ENCODE measurements at regions of chr19 and their contacts with region 1.

Region 1: GRCh38 chr19:7348587-7349230 is at the start of gene ARHGEF18:
- DNase-seq: peak; percentile 60
- H3K4me3 Mint-ChIP-seq: peak within 1 kb of the TSS; percentile 79
- H3K27ac Mint-ChIP-seq: peak within 1 kb of the TSS; percentile 85
- H3K4me1 Mint-ChIP-seq: peaks cover 56% of the 10 kb centered on the region
- H3K27me3 Mint-ChIP-seq: no peaks in the 10 kb centered on the region
- total RNA-seq, gene ARHGEF18: 31.9 to 36.0 TPM

Region 2: DNA sequence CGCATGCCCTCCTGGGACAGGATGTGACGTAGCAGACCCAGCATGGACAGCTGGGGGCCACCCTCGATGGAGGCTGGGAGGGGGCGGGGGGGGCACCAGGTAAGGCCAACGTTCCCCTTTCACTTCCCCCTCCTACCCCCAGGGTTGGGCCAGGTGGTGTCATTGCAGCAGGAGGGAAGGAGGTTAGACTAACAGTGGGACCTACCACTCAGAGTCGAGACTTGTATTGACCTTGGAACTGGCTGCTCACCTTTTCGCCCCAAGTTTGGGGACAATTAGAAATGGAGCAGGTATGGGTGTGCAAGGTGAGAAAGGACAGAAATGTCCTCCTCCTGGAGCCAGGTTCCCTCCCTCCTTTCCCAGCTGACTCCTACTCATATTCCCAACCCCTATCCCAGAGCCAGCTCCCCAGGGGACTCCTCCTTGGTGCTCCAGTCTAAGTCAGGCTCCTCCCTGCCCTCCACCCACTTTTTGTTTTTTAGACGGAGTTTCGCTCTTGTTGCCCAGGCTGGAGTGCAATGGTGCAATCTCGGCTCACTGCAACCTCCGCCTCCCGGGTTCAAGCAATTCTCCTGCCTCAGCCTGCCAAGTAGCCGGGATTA is 906.5 kb before region 1 on chr19:
- CTCF ChIA-PET with region 1: no interaction called
- POLR2A ChIA-PET with region 1: no interaction called
- DNase-seq: no peak
- H3K4me3 Mint-ChIP-seq: no peak overlapping the region
- H3K27ac Mint-ChIP-seq: no peak overlapping the region
- H3K4me1 Mint-ChIP-seq: no peaks in the 10 kb centered on the region
- H3K27me3 Mint-ChIP-seq: no peaks in the 10 kb centered on the region

Region 3: GRCh38 chr19:7360393-7360984 is 11.8 kb after region 1 on chr19:
- CTCF ChIA-PET with region 1: interaction called, 36 read pairs
- POLR2A ChIA-PET with region 1: interaction called, 13 read pairs
- DNase-seq: no peak
- H3K4me3 Mint-ChIP-seq: no peak overlapping the region
- H3K27ac Mint-ChIP-seq: no peak overlapping the region
- H3K4me1 Mint-ChIP-seq: peaks cover 6% of the 10 kb centered on the region
- H3K27me3 Mint-ChIP-seq: no peaks in the 10 kb centered on the region

Region 4: GRCh38 chr19:7366701-7367420 is 18.2 kb after region 1 on chr19:
- CTCF ChIA-PET with region 1: interaction called, 36 read pairs
- POLR2A ChIA-PET with region 1: interaction called, 10 read pairs
- DNase-seq: peak; percentile 36
- H3K4me3 Mint-ChIP-seq: no peak overlapping the region
- H3K27ac Mint-ChIP-seq: no peak overlapping the region
- H3K4me1 Mint-ChIP-seq: peaks cover 1% of the 10 kb centered on the region
- H3K27me3 Mint-ChIP-seq: no peaks in the 10 kb centered on the region